OCI-LY7 (cell line): ENCODE measurements at regions of chr3 and their contacts with region 1.

Region 1: GRCh38 chr3:171311784-171312183 is 148.4 kb downstream of the TNIK start:
- DNase-seq: no peak
- H3K4me3 ChIP-seq: no peak overlapping the region
- H3K27ac ChIP-seq: no peak overlapping the region
- H3K4me1 ChIP-seq: no peaks in the 10 kb centered on the region
- CTCF ChIP-seq: no peak

Region 2: GRCh38 chr3:171340434-171340833 is 28.6 kb after region 1 on chr3:
- CTCF ChIA-PET with region 1: no interaction called
- POLR2A ChIA-PET with region 1: interaction called, 10 read pairs
- intact Hi-C with region 1: no loop called
- DNase-seq: no peak
- H3K4me3 ChIP-seq: no peak overlapping the region
- H3K27ac ChIP-seq: no peak overlapping the region
- H3K4me1 ChIP-seq: no peaks in the 10 kb centered on the region
- CTCF ChIP-seq: no peak